Activated CD4-positive, alpha-beta T cell treated with anti-CD3 and anti-CD28 coated beads for 36 hours (primary cell): ENCODE measurements at regions of chr9 and their contacts with region 1.

Region 1: DNA sequence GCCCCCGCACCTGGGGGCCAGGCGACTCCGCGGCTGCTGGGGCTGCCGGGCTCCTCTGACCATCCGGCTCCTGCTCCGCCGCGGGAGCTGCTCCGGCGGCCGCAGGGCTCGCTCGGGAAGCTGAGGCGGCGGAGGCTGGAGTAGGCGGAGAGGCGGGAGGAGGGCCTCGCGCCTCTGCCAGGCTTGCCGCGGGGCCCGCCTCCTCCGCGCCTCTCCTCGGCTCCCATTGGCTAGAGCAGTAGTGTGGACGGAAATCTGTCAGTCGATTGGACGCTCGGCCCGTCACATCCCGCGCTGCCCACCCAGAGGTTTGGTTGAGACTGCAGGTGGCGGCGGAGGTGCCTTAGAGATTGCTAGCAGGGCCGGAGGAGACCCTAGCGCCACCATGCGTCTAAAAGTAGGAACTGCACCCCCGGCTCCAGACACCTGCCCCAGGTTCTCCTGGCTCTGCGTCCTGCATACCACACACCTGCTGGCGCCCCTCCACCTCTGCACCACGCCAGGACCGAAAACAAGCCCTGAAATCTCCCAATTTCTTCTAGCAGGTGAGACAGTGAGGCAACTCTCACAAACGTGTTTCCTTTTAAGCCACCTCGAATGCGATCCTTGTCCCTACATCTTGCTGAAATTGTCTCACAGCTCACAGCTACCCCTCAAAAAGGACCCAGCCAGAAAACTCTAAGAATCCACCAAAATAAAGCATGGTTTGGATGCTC is at the start of gene SCAI:
- DNase-seq: peak; percentile 99
- ATAC-seq: peak; percentile 100
- H3K4me3 Mint-ChIP-seq: peak within 1 kb of the TSS; percentile 83
- H3K27ac Mint-ChIP-seq: peak within 1 kb of the TSS; percentile 69
- H3K4me1 Mint-ChIP-seq: peaks cover 35% of the 10 kb centered on the region
- H3K27me3 Mint-ChIP-seq: no peaks in the 10 kb centered on the region
- total RNA-seq, gene SCAI: 13.0 to 13.8 TPM

Region 2: GRCh38 chr9:124861342-124862229 is 281.9 kb before region 1 on chr9 and contains the starts of genes ARPC5L and RPL35:
- CTCF ChIA-PET with region 1: interaction called, 3 read pairs
- POLR2A ChIA-PET with region 1: interaction called, 4 read pairs
- intact Hi-C with region 1: loop called in 1 of 2 experiments (anchors 1 kb)
- DNase-seq: peak; percentile 98
- ATAC-seq: peak; percentile 95
- H3K4me3 Mint-ChIP-seq: peak within 1 kb of the TSS; percentile 95
- H3K27ac Mint-ChIP-seq: peak within 1 kb of the TSS; percentile 95
- H3K4me1 Mint-ChIP-seq: peaks cover 46% of the 10 kb centered on the region
- H3K27me3 Mint-ChIP-seq: no peaks in the 10 kb centered on the region
- total RNA-seq, gene ARPC5L: 51.9 to 95.9 TPM
- total RNA-seq, gene RPL35: 2,227 to 2,561 TPM

Region 3: DNA sequence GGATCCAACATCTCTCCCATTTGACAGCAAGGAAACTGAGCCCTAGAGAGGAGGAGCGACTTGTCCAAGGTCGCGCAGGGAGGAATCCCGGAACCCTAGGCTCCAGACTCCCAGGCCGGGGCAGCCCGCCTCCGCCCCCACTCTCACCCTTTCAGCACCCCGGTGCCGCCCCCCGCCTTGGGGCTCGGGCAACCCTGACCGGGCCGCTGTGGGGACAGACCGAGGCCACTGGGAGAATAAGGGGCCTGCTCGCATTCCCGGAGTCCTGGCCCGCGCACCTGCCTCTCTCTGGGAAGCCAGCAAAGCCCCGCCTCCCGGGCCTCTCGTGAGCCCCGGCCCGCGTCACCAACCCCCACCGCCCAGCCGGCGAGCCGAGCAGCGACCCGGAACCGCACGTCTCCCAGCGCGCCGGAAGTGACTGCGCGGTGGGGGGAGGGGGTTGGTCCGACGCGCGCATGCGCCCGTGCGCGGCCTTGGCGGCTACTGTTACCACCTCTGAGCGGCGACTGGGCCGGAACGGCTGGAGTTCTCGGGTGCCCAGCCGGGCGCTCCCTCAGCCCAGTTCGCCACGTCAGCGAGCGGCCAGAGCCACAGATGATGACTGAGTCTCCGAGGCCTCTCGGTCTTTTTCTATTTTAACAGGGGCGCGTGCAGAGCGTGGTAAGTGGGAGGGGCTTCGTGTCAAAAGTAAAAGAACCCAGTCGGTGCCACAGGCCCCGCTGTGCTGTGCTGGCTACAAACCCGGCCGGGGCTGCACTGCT is 202.7 kb before region 1 on chr9 and contains the start of gene GOLGA1:
- CTCF ChIA-PET with region 1: interaction called, 3 read pairs
- POLR2A ChIA-PET with region 1: no interaction called
- intact Hi-C with region 1: loop called (anchors 1 kb)
- DNase-seq: peak; percentile 96
- ATAC-seq: peak; percentile 89
- H3K4me3 Mint-ChIP-seq: peak within 1 kb of the TSS; percentile 93
- H3K27ac Mint-ChIP-seq: peak within 1 kb of the TSS; percentile 99
- H3K4me1 Mint-ChIP-seq: peaks cover 20% of the 10 kb centered on the region
- H3K27me3 Mint-ChIP-seq: no peaks in the 10 kb centered on the region
- total RNA-seq, gene GOLGA1: 17.4 to 18.3 TPM

Region 4: GRCh38 chr9:125126019-125126746 is 17.4 kb before region 1 on chr9:
- CTCF ChIA-PET with region 1: interaction called, 7 read pairs
- POLR2A ChIA-PET with region 1: no interaction called
- intact Hi-C with region 1: loop called (anchors 1 kb)
- DNase-seq: peak; percentile 90
- ATAC-seq: peak; percentile 95
- H3K4me3 Mint-ChIP-seq: peak overlapping the region; percentile 64
- H3K27ac Mint-ChIP-seq: peak overlapping the region; percentile 100
- H3K4me1 Mint-ChIP-seq: peaks cover 34% of the 10 kb centered on the region
- H3K27me3 Mint-ChIP-seq: no peaks in the 10 kb centered on the region

Region 5: GRCh38 chr9:125200210-125201047 is 56.9 kb after region 1 on chr9 and contains the start of gene RABEPK:
- CTCF ChIA-PET with region 1: no interaction called
- POLR2A ChIA-PET with region 1: no interaction called
- intact Hi-C with region 1: loop called in 1 of 2 experiments (anchors 1 kb)
- DNase-seq: peak; percentile 95
- ATAC-seq: peak; percentile 98
- H3K4me3 Mint-ChIP-seq: peak within 1 kb of the TSS; percentile 83
- H3K27ac Mint-ChIP-seq: peak within 1 kb of the TSS; percentile 80
- H3K4me1 Mint-ChIP-seq: peaks cover 30% of the 10 kb centered on the region
- H3K27me3 Mint-ChIP-seq: no peaks in the 10 kb centered on the region
- total RNA-seq, gene RABEPK: 29.1 to 33.1 TPM